Panc1 (cell line): ENCODE measurements at regions of chr7 and their contacts with region 1.

Region 1: GRCh38 chr7:104923010-104923421 is 91.0 kb upstream of the KMT2E start:
- DNase-seq: peak; percentile 70
- ATAC-seq: peak; percentile 91
- H3K4me3 ChIP-seq: no peak overlapping the region
- H3K27ac ChIP-seq: peak overlapping the region; percentile 14; the same call in 1 of the 2 replicates
- H3K4me1 ChIP-seq: no peaks in the 10 kb centered on the region
- H3K27me3 ChIP-seq: 0 out of 2 replicates have a peak, but pooled peaks cover 2% of the 10 kb centered on the region
- CTCF ChIP-seq: peak; percentile 82

Region 2: DNA sequence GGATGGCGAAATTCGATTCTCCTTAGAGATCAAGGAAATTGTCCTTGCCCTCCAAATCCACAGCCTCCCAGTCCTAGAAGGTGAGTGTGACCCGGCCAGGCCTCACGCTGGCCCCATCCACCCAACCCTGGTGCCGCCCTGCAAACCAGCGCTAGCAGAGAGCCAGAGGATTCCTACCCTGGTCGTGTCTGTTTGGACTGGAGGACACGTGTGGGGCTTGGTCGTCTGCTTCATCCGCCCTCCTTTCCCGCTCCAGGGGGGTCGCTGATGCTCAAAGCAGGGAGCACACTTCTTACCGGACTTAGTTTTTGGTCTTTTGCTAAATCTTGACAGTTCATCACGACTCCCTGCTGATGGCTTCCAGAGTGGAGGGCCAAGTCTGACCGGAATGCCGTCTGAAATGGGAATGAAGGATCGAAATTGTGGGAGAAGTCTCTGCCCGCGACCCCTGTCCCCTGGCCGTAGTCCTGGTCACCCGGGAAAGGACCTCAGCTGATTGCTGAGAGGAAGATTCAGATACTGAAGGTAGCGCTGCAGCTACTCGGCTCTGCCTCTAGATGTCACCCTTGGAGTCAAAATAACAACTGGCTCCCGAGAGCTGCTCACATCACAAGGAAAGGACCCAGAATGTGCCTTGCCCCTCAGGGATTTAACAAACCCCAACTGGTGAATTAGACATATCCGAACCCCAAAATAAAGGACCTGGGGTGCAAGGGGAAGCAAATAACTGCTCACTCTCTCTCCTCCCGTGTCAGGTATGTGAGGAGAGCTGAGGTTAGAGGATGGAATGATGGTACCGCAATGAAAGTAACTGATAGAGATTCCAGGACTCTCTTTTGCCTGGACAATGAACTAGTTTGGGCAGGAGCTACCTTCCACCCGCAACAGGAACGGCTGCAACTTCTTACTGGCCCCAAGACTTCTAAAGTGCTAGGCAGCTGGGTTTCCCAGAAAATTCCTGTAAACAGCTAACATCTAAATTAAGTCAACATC is 691.7 kb before region 1 on chr7:
- CTCF ChIA-PET with region 1: interaction called, 4 read pairs
- POLR2A ChIA-PET with region 1: no interaction called
- in situ Hi-C with region 1: no loop called
- intact Hi-C with region 1: loop called (anchors 5 kb)
- DNase-seq: peak; percentile 57
- ATAC-seq: peak; percentile 98
- H3K4me3 ChIP-seq: no peak overlapping the region
- H3K27ac ChIP-seq: no peak overlapping the region
- H3K4me1 ChIP-seq: no peaks in the 10 kb centered on the region
- H3K27me3 ChIP-seq: peaks cover 9% of the 10 kb centered on the region
- CTCF ChIP-seq: peak; percentile 89

Region 3: DNA sequence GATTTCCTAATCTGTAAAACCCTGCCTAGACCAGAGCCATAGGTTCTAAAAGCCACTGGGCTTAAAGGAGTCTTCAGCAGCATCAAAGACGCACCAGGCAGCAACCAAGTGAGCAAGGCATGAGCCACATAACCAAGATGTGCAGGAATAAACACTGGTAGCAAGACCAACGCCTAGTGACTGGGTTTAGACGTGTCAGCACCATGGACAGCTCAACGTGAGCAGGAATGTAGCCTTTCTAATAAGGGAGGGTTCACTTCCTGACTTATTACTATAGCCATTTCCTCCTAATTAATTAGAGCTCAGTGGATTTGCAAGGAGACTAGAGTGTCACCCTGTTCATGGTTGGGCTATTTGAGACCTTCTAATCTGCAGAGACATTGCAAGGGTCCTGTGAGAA is 370.9 kb before region 1 on chr7:
- CTCF ChIA-PET with region 1: no interaction called
- POLR2A ChIA-PET with region 1: no interaction called
- in situ Hi-C with region 1: no loop called
- intact Hi-C with region 1: no loop called
- DNase-seq: no peak
- ATAC-seq: no peak
- H3K4me3 ChIP-seq: no peak overlapping the region
- H3K27ac ChIP-seq: no peak overlapping the region
- H3K4me1 ChIP-seq: no peaks in the 10 kb centered on the region
- H3K27me3 ChIP-seq: no peaks in the 10 kb centered on the region
- CTCF ChIP-seq: no peak

Region 4: GRCh38 chr7:104883718-104884452 is 39.1 kb before region 1 on chr7:
- CTCF ChIA-PET with region 1: interaction called, 26 read pairs
- POLR2A ChIA-PET with region 1: no interaction called
- in situ Hi-C with region 1: no loop called
- intact Hi-C with region 1: loop called (anchors 1 kb)
- DNase-seq: peak; percentile 51
- ATAC-seq: peak; percentile 98
- H3K4me3 ChIP-seq: no peak overlapping the region
- H3K27ac ChIP-seq: no peak overlapping the region
- H3K4me1 ChIP-seq: no peaks in the 10 kb centered on the region
- H3K27me3 ChIP-seq: 0 out of 2 replicates have a peak, but pooled peaks cover 2% of the 10 kb centered on the region
- CTCF ChIP-seq: peak; percentile 92

Region 5: DNA sequence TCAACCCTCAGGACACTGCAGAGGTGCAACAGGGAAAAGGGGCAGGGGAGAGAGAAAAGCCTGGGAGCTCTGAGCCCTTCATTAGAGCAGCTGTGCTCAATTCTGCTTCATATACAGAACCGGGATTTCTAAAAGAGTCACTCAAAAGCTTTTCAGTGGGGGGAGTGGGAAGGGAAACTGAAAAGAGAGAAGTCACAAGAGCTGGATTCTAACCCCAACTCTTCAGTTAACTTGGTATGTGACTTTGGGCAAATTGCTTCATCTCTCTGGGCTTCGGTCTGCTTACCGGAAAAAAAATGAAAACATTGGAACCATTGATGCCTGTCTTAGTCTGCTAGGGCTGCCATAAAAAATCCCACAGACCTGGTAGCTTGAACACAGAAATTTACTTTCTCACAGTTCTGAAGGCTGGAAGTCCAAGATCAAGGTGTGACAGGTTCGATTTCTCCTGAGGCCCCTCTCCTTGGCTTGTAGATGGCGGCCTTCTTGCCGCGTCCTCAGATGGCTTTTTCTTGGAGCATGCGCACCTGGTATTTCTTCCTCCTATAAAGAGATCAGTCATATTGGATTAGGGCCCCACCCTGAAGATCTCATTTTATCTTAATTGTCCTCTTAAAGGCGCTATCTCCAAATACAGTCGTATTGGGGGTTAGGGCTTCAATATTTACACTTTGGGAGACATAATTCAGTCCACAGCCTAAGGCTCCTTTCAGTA is 27.3 kb before region 1 on chr7:
- CTCF ChIA-PET with region 1: interaction called, 9 read pairs
- POLR2A ChIA-PET with region 1: interaction called, 11 read pairs
- in situ Hi-C with region 1: no loop called
- intact Hi-C with region 1: no loop called
- DNase-seq: no peak
- ATAC-seq: no peak
- H3K4me3 ChIP-seq: no peak overlapping the region
- H3K27ac ChIP-seq: no peak overlapping the region
- H3K4me1 ChIP-seq: no peaks in the 10 kb centered on the region
- H3K27me3 ChIP-seq: no peaks in the 10 kb centered on the region; the same call in 1 of the 2 replicates
- CTCF ChIP-seq: no peak

Region 6: GRCh38 chr7:104906556-104906955 is 16.5 kb before region 1 on chr7:
- CTCF ChIA-PET with region 1: interaction called, 11 read pairs
- POLR2A ChIA-PET with region 1: no interaction called
- in situ Hi-C with region 1: no loop called
- intact Hi-C with region 1: no loop called
- DNase-seq: no peak
- ATAC-seq: no peak
- H3K4me3 ChIP-seq: no peak overlapping the region
- H3K27ac ChIP-seq: no peak overlapping the region
- H3K4me1 ChIP-seq: no peaks in the 10 kb centered on the region
- H3K27me3 ChIP-seq: peaks cover 19% of the 10 kb centered on the region
- CTCF ChIP-seq: no peak

Region 7: GRCh38 chr7:105187302-105188169 is 264.5 kb after region 1 on chr7:
- CTCF ChIA-PET with region 1: no interaction called
- POLR2A ChIA-PET with region 1: no interaction called
- in situ Hi-C with region 1: no loop called
- intact Hi-C with region 1: no loop called
- DNase-seq: no peak
- ATAC-seq: no peak
- H3K4me3 ChIP-seq: no peak overlapping the region
- H3K27ac ChIP-seq: no peak overlapping the region
- H3K4me1 ChIP-seq: no peaks in the 10 kb centered on the region
- H3K27me3 ChIP-seq: no peaks in the 10 kb centered on the region
- CTCF ChIP-seq: no peak